Posterior vena cava (tissue), 2 donors: ENCODE measurements at regions of chr1 and their contacts with region 1.

Region 1: DNA sequence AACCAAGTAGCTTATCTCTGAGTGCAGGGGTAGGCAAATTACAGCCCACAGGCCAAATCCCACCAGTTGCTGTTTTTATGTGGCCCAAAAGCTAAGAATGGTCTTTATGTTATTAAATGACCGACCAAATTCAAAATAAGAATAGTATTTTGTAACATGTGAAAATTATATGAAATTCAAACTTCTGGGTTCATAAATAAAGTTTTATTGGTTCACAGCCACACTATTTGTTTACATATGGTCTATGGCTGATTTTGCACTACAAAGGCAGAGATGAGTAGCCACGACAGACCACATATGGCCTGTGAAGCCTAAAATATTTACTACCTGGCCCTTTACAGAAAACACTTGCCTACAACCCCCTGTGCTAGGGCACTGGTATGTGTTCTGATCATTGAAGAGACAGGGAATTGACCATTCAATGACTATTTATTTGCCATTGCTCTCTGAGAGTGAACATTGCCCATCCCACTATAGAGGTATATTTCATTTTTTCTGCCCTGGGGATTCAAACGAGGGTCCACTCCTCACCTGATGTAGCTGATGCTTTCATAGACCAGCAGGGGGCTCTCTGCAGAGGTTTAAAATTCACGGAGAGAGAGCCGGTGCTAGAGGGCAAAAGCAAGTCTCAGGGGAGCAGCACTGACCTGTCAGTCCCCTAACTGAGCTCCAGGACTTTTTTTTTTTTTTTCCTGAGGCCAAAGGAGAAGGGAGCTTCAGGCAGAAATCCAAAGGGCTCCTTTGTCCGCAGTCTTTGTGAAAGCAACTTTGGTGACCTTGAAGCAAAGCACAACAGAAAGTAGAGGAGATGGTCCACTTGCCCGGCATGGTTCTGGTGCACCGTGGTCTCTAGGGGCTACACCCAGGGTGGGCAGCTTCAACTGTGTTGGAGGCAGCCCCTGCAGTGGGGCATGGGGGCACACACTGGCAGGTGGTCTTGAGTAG is 7.3 kb upstream of the GNL2 start:
- DNase-seq: no peak

Region 2: GRCh38 chr1:37634244-37634991 is 31.4 kb after region 1 on chr1 and contains the start of gene RSPO1:
- intact Hi-C with region 1: no loop called
- DNase-seq: peak; percentile 80
- total RNA-seq, gene RSPO1: 0.60 to 1.2 TPM

Region 3: GRCh38 chr1:37682334-37682987 is 79.4 kb after region 1 on chr1:
- intact Hi-C with region 1: loop called in 1 of 2 experiments (anchors 10 kb)
- DNase-seq: peak; percentile 87

Region 4: DNA sequence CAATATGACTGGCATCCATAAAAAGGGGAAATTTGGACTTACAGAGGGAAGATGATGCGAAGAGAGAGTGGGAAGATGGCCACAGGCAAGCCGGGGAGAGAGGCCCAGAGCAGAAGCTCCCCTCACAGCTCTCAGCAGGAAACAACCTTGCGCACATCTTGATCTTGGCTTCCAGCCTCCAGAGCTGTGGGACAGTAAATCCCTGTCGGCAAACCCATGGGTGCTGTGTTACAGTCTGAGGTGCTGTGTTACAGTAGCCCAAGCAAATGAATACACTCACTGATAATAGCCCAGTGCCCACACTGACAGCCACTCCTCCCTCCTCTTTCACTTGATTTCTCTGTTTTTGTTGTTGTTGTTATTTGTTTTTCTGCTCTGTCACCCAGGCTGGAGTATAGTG is 111.7 kb after region 1 on chr1:
- intact Hi-C with region 1: loop called in 1 of 2 experiments (anchors 1 kb)
- DNase-seq: peak; percentile 16

Region 5: GRCh38 chr1:37978541-37978940 is 375.5 kb after region 1 on chr1:
- intact Hi-C with region 1: no loop called
- DNase-seq: no peak

Region 6: DNA sequence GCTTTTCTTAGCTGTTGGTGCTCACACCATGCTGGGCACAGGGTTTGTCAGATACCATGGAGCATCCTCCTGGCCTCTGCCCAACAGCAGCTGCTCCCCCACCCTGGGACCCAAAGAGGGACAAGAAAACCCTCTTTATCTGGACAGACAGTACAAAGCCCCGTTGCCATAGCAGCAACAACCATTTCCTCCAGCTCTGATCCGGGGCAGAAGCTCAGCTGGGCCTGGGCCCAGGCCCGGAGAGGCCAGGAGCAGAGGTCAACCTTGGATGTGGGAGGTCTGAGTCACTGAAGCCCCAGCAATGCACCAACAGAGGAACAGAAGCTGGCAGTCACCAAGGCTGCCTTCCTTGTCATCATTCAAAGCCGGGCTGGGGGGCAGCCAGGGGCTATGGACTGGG is 672.0 kb after region 1 on chr1:
- intact Hi-C with region 1: no loop called
- DNase-seq: no peak

Region 7: GRCh38 chr1:39590551-39590950 is 1987.5 kb after region 1 on chr1:
- intact Hi-C with region 1: loop called in 1 of 2 experiments (anchors 5 kb)
- DNase-seq: peak; percentile 46